ENCODE measurements at regions of chr16 and their contacts with region 1.

Region 1: DNA sequence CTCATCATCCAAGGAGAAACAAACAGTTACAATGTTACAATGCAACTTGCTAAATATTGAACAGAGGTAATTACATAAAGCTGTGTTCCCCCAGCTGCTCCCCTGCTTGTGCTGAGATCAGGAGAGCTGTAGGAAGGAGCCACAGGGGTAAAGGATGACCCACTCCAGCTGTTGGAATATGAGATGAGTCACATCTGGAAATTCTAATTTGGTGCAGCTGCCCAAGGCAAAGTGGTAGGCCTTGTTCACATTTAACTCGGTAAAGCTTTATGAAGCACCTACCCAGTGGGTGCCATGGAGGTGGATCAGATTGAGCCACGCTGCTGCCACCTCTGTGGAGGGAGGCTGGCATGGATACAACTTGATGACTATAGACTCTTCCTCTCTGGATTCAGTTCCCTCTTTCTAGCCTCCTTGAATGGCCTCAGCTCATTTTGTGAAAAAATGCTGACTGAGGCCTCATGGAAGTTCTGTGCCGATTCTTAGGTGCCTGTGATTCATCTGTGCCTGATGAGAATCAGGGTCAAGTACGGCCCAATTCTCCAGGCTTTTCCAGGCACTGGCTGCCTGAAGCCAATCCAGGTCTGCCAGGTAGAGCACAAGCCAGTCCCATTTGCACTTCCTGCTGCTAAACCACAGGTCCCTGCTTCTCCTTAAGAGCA is 7.4 kb downstream of the ZNF689 start:
- DNase-seq: no peak
- H3K4me3 ChIP-seq: no peak overlapping the region
- CTCF ChIP-seq: no peak

Region 2: GRCh38 chr16:30166202-30166902 is 436.4 kb before region 1 on chr16:
- CTCF ChIA-PET with region 1: no interaction called
- POLR2A ChIA-PET with region 1: no interaction called
- DNase-seq: no peak
- H3K4me3 ChIP-seq: no peak overlapping the region
- CTCF ChIP-seq: no peak

Region 3: DNA sequence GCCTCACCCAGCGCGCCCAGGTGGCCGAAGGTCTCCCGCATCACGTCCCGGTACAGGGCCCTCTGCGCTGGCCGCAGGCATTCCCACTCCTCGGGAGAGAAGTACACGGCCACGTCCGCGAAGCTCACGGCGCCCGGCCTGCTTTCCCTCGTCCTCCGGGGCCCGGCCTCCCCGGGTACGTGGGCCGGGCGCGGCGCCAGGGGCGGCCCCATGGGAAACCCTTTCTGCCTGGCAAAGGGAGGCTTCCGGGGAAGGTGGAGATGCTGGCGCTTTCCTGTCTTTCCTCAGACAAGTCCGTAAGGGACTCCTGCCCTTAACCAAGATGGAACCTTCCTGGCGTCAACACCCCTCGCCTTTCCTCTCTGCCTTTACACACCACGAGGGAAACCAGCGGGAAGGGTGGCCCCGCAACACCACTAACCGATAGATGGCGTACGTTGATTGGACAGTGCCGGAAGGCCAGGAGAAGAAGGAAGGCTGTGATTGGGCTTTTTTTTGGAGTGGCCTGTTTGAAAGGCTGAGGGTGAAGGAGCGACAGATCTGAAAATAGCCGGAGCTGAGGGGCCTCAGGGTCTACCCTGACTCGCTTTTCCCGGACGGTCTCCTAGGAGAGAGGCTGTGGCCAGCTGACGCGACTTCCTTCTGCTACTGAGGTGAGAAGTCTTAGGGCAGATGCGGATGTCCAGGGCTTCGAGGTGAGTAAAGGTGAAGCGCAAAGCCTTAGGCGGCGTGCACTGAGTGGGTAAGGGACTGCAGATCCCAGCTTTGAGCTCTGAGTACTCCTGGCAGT is 17.2 kb before region 1 on chr16 and contains the start of gene ZNF785:
- CTCF ChIA-PET with region 1: interaction called, 57 read pairs
- POLR2A ChIA-PET with region 1: no interaction called
- DNase-seq: peak; percentile 96
- H3K4me3 ChIP-seq: peak within 1 kb of the TSS; percentile 79
- CTCF ChIP-seq: peak; percentile 11

Region 4: DNA sequence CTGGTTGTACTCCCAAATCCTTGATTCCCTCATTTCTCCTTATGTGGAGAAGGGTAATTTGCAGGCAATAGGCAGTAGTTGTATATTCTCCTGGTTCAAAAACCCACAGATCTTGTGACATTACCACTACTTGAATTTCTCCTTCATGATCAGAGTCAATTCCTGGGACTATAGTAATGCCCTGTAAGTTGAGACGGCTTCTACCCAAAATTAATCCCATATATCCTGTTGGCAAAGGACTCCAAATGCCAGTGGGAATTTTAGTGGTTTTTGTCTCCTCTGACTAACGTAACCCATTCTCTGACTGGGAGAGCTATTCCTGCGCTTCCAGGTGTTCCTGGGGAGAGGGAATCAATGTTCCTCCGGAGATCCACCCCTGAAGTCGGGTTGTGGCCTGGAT is 19.0 kb after region 1 on chr16:
- CTCF ChIA-PET with region 1: interaction called, 14 read pairs
- POLR2A ChIA-PET with region 1: no interaction called
- DNase-seq: peak; percentile 26
- H3K4me3 ChIP-seq: no peak overlapping the region
- CTCF ChIP-seq: no peak

Region 5: GRCh38 chr16:30724641-30725417 is 122.1 kb after region 1 on chr16:
- CTCF ChIA-PET with region 1: no interaction called
- POLR2A ChIA-PET with region 1: no interaction called
- DNase-seq: no peak
- H3K4me3 ChIP-seq: no peak overlapping the region
- CTCF ChIP-seq: no peak